CD4-positive, alpha-beta T cell (primary cell): ENCODE measurements at regions of chr9 and their contacts with region 1.

Region 1: DNA sequence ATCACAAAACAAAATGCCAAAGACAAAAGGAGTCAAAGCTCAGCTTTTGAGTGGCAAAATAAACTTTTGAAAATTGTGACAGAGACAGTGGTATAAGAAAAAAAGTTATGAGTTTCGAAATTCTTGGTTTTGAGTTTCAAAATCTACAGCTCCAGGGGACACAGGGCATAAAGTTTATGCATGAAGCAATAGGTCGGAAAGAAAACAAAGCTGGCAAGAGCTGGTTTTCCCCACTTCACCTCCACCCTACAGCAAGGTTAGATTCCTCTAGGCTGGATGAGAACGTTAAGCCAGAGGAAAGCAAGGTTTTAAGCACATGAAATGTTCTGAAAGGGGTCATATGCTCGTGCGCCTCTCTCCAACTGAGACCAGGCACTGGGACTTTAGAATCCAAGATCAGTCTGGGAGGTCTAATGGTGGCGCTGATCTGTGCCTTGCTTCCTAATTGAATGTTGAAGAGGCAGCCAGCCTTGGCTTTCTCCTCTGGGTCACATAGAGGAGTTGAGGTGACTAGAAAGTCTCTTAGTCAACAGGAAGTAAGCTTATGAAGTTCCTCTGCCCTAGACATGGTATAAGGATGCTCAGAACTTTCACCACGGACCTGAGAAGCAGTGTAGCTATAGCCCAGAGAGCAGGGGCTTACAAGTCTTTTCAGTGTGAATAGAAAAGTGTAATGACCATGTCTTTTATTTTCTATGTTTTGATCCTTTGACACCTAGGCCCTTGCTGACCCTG is 167.7 kb upstream of the DMAC1 start:
- DNase-seq: peak in 3 of 14 experiments; percentile 24 to 27 (median 26)
- ATAC-seq: peak; percentile 82
- H3K4me3 ChIP-seq: no peak overlapping the region
- H3K4me3 Mint-ChIP-seq: no peak overlapping the region
- H3K27ac ChIP-seq: no peak overlapping the region
- H3K27ac Mint-ChIP-seq: peak overlapping the region; percentile 47
- H3K4me1 ChIP-seq: peaks cover 9% of the 10 kb centered on the region
- H3K4me1 Mint-ChIP-seq: peaks cover 15% of the 10 kb centered on the region
- H3K27me3 ChIP-seq: no peaks in the 10 kb centered on the region
- H3K27me3 Mint-ChIP-seq: no peaks in the 10 kb centered on the region
- CTCF ChIP-seq: no peak

Region 2: DNA sequence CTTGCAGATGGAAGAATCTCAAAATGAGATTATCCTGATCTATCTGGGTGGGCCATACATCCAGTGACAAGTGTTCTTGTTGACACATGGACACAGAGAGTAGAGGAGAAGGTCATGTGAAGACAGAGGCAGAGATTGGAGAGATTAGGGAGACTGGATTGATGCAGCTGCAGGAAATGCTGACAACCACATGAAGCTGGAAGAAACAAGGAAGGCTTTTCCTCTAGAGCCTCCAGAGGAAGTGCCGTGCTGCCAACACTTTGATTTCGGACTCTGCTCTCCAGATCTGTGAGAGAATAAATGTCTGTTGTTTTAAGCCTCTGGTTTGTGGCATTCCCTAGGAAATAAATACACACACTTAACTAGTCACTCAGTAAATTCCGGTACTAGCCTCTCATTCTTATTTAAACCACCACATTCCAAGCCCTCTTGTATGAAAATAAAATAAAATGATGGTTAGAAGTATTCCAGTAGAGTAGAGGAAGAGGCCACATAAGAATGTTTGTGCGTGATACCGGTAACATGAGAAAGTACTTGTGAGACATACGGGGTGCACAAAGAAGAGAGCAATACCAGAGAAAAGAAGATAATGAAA is 56.7 kb before region 1 on chr9:
- CTCF ChIA-PET with region 1: no interaction called
- POLR2A ChIA-PET with region 1: no interaction called
- intact Hi-C with region 1: loop called in 1 of 2 experiments (anchors 5 kb)
- DNase-seq: no peak
- ATAC-seq: no peak
- H3K4me3 ChIP-seq: no peak overlapping the region
- H3K4me3 Mint-ChIP-seq: no peak overlapping the region
- H3K27ac ChIP-seq: no peak overlapping the region
- H3K27ac Mint-ChIP-seq: no peak overlapping the region
- H3K4me1 ChIP-seq: no peaks in the 10 kb centered on the region
- H3K4me1 Mint-ChIP-seq: peaks cover 8% of the 10 kb centered on the region
- H3K27me3 ChIP-seq: no peaks in the 10 kb centered on the region
- H3K27me3 Mint-ChIP-seq: no peaks in the 10 kb centered on the region
- CTCF ChIP-seq: no peak

Region 3: GRCh38 chr9:8030095-8030494 is 62.8 kb after region 1 on chr9:
- CTCF ChIA-PET with region 1: no interaction called
- POLR2A ChIA-PET with region 1: no interaction called
- intact Hi-C with region 1: no loop called
- DNase-seq: no peak
- ATAC-seq: no peak
- H3K4me3 ChIP-seq: no peak overlapping the region
- H3K4me3 Mint-ChIP-seq: no peak overlapping the region
- H3K27ac ChIP-seq: no peak overlapping the region
- H3K27ac Mint-ChIP-seq: no peak overlapping the region
- H3K4me1 ChIP-seq: no peaks in the 10 kb centered on the region
- H3K4me1 Mint-ChIP-seq: no peaks in the 10 kb centered on the region
- H3K27me3 ChIP-seq: no peaks in the 10 kb centered on the region
- H3K27me3 Mint-ChIP-seq: no peaks in the 10 kb centered on the region
- CTCF ChIP-seq: no peak

Region 4: DNA sequence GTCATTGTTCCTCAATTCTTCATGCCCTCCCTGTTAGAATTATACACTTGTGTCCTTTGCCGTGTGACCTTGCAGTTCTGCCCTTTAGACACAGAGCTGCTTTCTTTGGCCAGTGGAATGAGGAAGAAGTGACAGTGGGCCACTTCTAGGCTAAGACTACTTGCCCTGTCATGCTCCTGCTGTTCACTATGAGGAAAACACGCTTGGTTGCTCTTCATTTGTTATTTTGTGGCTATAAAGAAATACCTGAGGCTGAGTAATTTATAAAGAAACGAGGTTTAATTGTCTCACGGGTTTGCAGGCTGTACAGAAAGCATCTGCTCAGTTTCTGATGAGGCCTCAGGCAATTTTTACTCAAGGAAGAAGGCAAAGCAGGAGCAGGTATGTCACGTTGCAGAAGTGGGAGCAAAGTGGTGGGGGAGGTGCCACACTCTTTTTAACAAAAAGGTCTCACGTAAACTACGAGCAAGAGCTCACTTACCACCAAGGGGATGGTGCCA is 111.4 kb after region 1 on chr9:
- CTCF ChIA-PET with region 1: no interaction called
- POLR2A ChIA-PET with region 1: no interaction called
- intact Hi-C with region 1: no loop called
- DNase-seq: no peak
- ATAC-seq: no peak
- H3K4me3 ChIP-seq: no peak overlapping the region
- H3K4me3 Mint-ChIP-seq: no peak overlapping the region
- H3K27ac ChIP-seq: no peak overlapping the region
- H3K27ac Mint-ChIP-seq: no peak overlapping the region
- H3K4me1 ChIP-seq: no peaks in the 10 kb centered on the region
- H3K4me1 Mint-ChIP-seq: no peaks in the 10 kb centered on the region
- H3K27me3 ChIP-seq: no peaks in the 10 kb centered on the region
- H3K27me3 Mint-ChIP-seq: peaks cover 7% of the 10 kb centered on the region
- CTCF ChIP-seq: no peak